ENCODE measurements at regions of chr2 and their contacts with region 1.

Region 1: DNA sequence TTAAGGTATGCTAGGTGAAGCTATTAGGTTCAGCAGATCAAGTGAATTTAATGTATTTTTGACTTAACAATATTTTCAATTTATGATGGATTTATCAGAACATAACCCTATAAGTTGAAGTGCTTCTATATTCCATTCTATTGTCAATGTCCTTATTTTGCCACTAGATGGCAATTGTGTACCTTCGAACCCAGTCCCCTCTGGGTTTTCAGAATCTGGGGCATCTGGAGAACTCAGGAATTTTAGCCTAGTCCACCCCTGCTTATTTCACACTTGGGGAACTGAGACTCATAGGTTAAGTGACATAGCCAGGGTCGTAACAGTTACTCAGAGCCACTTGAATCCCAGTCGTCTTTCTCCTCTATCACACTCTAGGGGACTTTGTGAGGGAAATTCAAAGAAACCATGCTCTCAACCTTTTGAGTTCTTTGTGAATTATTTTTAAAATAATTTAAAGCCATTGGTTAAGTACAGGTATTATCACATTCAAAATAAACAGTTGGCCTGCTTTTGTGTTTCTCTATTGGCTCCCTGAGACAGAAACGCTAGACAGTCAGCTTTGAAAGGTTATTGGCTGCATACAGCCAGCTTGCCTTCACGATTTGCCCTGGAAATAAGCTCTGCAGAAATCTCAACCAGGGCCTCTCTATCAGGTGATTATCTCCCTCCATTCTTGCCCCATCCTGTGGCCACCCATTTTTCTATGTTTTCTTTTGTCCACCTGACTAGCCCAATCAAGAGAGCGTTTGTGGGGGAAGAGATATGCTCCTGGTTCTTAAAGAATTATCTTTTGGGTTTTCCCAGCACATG is 145.0 kb downstream of the TTC27 start:
- DNase-seq: peak; percentile 17
- ATAC-seq: no peak
- H3K4me3 ChIP-seq: no peak overlapping the region
- H3K4me3 Mint-ChIP-seq: no peak overlapping the region
- H3K27ac ChIP-seq: no peak overlapping the region
- H3K27ac Mint-ChIP-seq: no peak overlapping the region
- H3K4me1 ChIP-seq: no peaks in the 10 kb centered on the region
- H3K4me1 Mint-ChIP-seq: no peaks in the 10 kb centered on the region
- H3K27me3 ChIP-seq: no peaks in the 10 kb centered on the region
- H3K27me3 Mint-ChIP-seq: no peaks in the 10 kb centered on the region
- CTCF ChIP-seq: peak; percentile 53

Region 2: DNA sequence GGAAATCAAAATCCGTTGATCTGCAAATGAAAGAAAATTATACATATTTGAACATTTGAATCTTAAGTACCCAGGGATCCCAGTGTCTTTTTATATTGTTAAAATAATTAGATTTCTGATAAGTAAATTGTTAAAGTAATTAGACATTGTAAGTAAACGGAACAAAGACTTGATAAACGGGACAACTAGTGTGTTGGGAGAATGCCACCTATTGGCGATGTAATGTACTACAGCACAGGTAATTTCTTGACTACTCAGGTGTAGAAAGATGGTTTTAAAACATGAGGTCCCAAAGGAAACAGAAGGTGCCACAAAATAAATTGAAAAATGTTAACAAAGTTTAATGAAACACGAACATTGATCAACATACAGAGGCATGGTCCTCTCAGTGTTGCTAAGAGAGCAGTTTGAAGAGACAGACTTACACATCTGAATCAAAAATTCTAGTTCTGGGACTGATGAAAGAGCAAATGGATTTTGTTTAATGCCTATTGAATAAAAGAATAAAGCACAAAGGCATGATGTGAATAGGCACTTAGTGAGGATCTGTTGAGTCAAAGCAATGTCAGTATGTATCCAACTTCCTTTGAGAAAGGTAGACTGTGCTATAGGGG is 600.2 kb after region 1 on chr2:
- CTCF ChIA-PET with region 1: interaction called, 4 read pairs
- POLR2A ChIA-PET with region 1: no interaction called
- intact Hi-C with region 1: loop called (anchors 2 kb)
- DNase-seq: peak; percentile 70
- ATAC-seq: peak; percentile 57
- H3K4me3 ChIP-seq: no peak overlapping the region
- H3K4me3 Mint-ChIP-seq: no peak overlapping the region
- H3K27ac ChIP-seq: no peak overlapping the region
- H3K27ac Mint-ChIP-seq: no peak overlapping the region
- H3K4me1 ChIP-seq: no peaks in the 10 kb centered on the region
- H3K4me1 Mint-ChIP-seq: no peaks in the 10 kb centered on the region
- H3K27me3 ChIP-seq: no peaks in the 10 kb centered on the region
- H3K27me3 Mint-ChIP-seq: no peaks in the 10 kb centered on the region
- CTCF ChIP-seq: peak; percentile 97